AG04449 (cell line): ENCODE measurements at regions of chr1 and their contacts with region 1.

Region 1: GRCh38 chr1:94463765-94464330 is 45.7 kb downstream of the ABCD3 start:
- DNase-seq: no peak
- H3K4me3 ChIP-seq: no peak overlapping the region
- CTCF ChIP-seq: peak; percentile 45

Region 2: GRCh38 chr1:94025383-94026340 is 438.2 kb before region 1 on chr1:
- CTCF ChIA-PET with region 1: interaction called, 17 read pairs
- POLR2A ChIA-PET with region 1: no interaction called
- DNase-seq: no peak
- H3K4me3 ChIP-seq: no peak overlapping the region
- CTCF ChIP-seq: peak; percentile 41

Region 3: DNA sequence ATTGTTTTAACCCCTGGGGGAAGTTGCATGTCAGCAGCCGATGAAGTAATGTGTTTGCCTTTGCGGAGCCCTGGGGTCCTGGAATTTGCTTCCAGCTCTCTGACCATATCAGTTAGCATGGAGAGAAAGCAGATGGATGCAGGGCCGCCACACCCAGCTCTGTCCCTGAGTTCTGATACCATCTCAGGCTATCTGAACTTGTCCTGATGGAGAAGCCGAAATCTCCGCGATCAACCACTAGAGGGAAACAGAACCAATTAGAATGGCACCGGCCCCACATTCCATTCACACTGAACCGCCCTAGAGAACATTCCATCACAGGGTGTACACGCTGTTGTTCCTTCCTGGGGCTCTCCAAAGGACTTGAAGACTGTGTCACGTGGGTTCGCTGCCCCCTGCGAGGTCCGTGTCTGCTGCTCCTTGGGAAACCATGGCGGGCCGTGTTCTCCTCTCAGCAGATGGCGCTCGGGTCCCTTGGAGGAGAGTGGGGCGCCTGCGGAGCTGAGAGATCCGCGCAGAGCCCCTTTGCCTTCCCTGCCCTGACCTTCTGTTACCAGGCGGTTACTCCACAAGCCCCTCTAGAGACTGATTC is 418.3 kb before region 1 on chr1:
- CTCF ChIA-PET with region 1: interaction called, 15 read pairs
- POLR2A ChIA-PET with region 1: no interaction called
- DNase-seq: peak; percentile 93
- H3K4me3 ChIP-seq: no peak overlapping the region; the same call in 1 of the 2 replicates
- CTCF ChIP-seq: peak; percentile 63

Region 4: GRCh38 chr1:94396356-94397010 is 67.4 kb before region 1 on chr1:
- CTCF ChIA-PET with region 1: interaction called, 14 read pairs
- POLR2A ChIA-PET with region 1: no interaction called
- DNase-seq: no peak
- H3K4me3 ChIP-seq: no peak overlapping the region
- CTCF ChIP-seq: no peak

Region 5: DNA sequence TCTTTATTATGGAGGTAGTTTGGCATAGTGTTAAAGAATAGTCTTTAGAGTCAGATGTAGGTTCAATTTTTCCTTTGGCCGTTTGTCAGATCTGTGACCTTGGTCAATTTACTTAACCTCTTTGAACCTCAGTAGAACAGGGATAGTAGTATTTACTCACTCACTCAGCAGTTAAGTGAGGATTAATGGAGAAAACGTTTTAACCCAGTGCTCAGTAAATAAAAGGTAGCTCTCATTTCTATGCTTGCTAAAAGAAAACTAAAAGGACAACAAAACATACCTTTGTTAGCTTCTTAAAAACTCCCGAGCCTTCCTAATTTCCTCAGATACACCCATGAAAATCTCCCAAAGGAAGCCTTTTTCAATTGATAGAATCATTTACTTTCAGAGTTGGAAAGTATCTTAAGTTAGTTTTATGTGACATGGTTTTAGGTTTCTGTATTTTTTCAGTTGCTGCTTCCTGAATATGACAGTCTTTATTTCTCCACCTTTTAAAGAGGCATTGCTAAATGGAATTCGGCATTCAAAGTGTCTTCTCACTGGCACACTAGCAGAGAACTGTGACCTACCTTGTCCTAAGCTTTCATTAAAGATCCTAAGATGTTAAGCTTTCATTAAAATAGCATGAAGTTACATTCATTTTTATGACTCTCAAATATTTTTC is 37.9 kb before region 1 on chr1:
- CTCF ChIA-PET with region 1: interaction called, 11 read pairs
- POLR2A ChIA-PET with region 1: no interaction called
- DNase-seq: no peak
- H3K4me3 ChIP-seq: no peak overlapping the region
- CTCF ChIP-seq: no peak